CD8-positive, alpha-beta memory T cell (primary cell): ENCODE measurements at regions of chr7 and their contacts with region 1.

Region 1: DNA sequence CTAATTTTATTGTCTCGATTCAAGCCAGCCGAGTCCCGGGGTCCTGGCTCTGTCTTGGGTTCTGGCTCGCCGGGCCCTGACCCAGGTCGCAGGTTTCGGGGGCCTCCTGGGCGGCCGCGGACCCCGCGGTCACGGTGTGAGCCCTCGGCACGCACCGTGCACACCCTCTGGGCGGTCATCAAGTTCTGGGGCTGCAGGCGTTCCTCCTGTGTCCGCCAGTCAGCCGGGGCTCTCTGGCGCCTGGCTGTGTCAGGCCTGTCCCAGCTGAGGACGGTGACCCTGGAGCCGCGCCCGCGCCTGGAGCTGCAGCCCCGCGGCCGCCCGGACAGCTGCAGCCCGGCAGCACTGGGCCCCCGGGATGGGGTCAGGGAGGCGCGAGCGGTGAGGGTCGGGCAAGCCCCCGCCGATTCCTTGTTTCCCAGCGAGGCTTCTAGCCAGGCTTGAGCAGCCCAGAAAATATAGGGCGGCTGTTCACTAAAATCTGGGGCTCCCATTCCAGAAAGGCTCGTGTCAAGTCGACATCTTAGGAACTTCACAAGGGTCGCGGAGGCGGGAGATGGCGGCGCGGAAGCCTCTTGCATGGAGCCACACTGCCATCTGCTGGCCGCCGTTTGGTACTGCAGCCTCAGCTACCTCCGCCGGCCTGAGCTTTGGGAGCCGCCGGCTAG is 4.2 kb upstream of the HOXA7 start:
- DNase-seq: peak; percentile 77 to 89 (median 79)
- H3K4me3 ChIP-seq: peak overlapping the region; percentile 72
- H3K4me3 Mint-ChIP-seq: peak overlapping the region; percentile 78 to 91 (median 82)
- H3K27ac ChIP-seq: no peak overlapping the region
- H3K27ac Mint-ChIP-seq: peak overlapping the region in 3 of 8 donors; percentile 43 to 75 (median 47)
- H3K4me1 ChIP-seq: peaks cover 30% of the 10 kb centered on the region
- H3K4me1 Mint-ChIP-seq: peaks cover 27 to 46% (median 36%) of the 10 kb centered on the region in 3 donors
- H3K27me3 ChIP-seq: peaks cover 81% of the 10 kb centered on the region
- H3K27me3 Mint-ChIP-seq: peaks cover 84 to 87% of the 10 kb centered on the region in 2 donors

Region 2: GRCh38 chr7:25894902-25895791 is 1265.5 kb before region 1 on chr7:
- CTCF ChIA-PET with region 1: interaction called, 26 read pairs
- POLR2A ChIA-PET with region 1: no interaction called
- DNase-seq: peak; percentile 37 to 69 (median 50)
- H3K4me3 ChIP-seq: peak overlapping the region; percentile 30
- H3K4me3 Mint-ChIP-seq: peak overlapping the region in 6 of 7 donors; percentile 60 to 80 (median 64)
- H3K27ac ChIP-seq: no peak overlapping the region
- H3K27ac Mint-ChIP-seq: peak overlapping the region in 1 of 8 donors; percentile 9
- H3K4me1 ChIP-seq: peaks cover 15% of the 10 kb centered on the region
- H3K4me1 Mint-ChIP-seq: peaks cover 24 to 35% (median 34%) of the 10 kb centered on the region in 3 donors
- H3K27me3 ChIP-seq: no peaks in the 10 kb centered on the region
- H3K27me3 Mint-ChIP-seq: peaks cover under 1 to 8% of the 10 kb centered on the region in 2 donors

Region 3: DNA sequence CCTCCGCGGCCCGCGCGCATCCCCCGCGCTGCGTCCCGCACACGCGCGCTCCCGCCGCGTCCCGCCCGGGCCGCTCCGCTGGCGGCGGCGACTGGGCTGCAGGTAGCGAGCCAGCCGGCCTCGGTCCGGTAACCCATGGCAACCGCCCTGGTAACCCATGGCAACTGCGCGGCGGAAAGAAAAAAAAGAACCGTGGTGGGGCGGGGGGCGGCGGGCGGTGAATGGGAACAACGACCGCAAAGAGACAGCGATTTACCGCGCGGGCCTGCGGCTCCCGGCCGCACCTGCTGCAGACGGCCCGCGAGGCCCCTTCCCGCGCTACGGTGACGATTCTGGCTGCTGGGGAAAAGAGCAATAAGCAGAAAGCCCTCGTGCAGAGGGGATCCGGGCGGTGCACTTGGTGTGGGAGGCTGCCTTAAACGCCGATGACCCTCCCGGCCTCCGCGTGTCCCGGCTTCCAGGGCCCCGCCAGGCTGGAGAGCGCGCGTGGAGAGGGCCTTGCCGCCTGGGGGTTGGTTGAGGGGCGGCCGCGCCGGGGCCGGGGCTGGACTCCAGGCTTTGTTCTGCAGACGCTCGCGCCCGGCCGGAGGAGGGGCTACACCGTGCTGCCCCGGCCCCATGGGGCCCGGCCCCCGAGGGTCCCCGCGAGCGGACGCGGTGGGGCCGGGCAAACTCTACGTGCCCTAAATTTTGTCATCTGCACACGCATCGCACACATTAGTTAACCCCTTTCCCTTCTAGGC is 784.3 kb before region 1 on chr7:
- CTCF ChIA-PET with region 1: interaction called, 11 read pairs
- POLR2A ChIA-PET with region 1: no interaction called
- DNase-seq: peak in 4 of 5 donors; percentile 21 to 59 (median 31)
- H3K4me3 ChIP-seq: peak overlapping the region; percentile 57
- H3K4me3 Mint-ChIP-seq: peak overlapping the region; percentile 77 to 94 (median 86)
- H3K27ac ChIP-seq: no peak overlapping the region
- H3K27ac Mint-ChIP-seq: peak overlapping the region in 2 of 8 donors; percentile 22 to 89
- H3K4me1 ChIP-seq: peaks cover 5% of the 10 kb centered on the region
- H3K4me1 Mint-ChIP-seq: peaks cover 0 to 10% (median 5%) of the 10 kb centered on the region in 3 donors
- H3K27me3 ChIP-seq: peaks cover 10% of the 10 kb centered on the region
- H3K27me3 Mint-ChIP-seq: peaks cover 8 to 45% of the 10 kb centered on the region in 2 donors

Region 4: DNA sequence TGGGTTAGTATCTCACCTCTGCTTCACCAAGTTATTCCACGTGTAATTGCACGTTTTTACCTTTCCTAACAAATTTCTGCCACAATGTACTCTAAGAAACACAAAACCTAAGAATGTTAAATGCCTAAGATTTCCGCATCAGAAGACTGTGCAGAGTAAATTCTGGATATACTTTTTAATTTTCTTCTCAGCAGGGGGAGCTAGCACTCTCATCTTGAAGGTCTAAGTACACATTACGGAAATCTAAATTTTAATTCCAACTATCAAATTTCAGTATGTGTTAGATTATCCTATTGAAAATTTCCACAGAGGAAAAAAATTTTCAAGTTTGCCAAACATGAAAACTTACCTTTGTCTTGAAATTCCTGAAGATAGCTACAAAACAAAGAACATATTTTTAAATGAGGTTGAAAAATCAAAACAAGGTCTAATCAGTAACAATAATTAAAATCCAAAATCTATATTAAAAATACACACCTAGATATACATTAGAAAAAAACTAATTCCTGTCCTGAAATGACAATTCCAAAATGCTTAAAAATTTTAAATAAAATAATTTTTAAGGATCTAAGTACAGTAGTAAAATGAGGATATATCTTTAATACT is 306.8 kb before region 1 on chr7:
- CTCF ChIA-PET with region 1: interaction called, 14 read pairs
- POLR2A ChIA-PET with region 1: no interaction called
- DNase-seq: no peak
- H3K4me3 ChIP-seq: no peak overlapping the region
- H3K4me3 Mint-ChIP-seq: no peak overlapping the region
- H3K27ac ChIP-seq: no peak overlapping the region
- H3K27ac Mint-ChIP-seq: no peak overlapping the region
- H3K4me1 ChIP-seq: peaks cover 5% of the 10 kb centered on the region
- H3K4me1 Mint-ChIP-seq: peaks cover 8 to 18% (median 11%) of the 10 kb centered on the region in 3 donors
- H3K27me3 ChIP-seq: peaks cover 4% of the 10 kb centered on the region
- H3K27me3 Mint-ChIP-seq: peaks cover 12 to 28% of the 10 kb centered on the region in 2 donors

Region 5: DNA sequence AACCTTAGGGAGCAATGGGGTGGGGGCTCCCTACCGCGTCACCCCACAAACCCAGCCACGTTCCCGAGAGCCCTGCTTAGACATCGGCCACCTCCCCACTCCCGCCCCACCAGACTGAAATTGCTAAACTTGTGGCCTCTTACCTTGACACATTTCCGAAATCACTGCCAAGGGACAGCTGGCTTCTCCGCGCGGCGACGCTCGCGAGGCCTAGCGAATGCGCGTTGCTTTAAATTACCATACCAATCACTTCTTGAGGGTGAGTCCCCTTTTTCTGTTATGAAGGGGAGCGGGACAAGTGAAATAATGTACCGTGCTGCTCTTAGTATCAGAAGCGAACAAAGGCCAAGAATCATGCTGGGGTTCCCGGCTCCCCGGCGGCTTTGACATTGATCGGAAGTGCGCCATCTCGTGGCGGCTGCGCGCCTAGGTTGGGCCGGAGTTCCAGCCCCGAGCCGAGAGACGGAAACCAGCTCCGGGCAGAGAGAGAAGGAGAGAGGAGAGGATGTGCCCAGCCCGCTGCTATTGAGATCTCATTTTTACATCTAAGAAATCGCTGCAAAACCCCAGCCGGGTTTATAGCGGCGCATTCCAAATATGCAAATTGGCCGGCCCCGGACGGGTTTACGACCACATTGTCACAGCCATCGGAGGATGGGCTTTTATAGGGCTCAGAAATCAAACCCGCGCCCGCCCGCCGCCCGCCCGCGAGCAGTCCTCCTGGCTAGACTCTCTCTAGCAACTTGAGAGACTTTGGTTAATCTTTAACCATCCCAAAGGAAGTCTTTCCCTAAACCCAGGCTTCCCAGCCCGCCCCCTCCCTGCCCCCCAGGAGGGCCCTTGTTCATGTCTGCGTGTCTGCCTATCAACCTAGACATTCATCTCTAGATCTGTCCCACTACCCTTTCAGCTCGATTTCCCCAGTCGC is 19.1 kb after region 1 on chr7:
- CTCF ChIA-PET with region 1: interaction called, 31 read pairs
- POLR2A ChIA-PET with region 1: no interaction called
- DNase-seq: peak in 3 of 5 donors; percentile 40 to 58 (median 53)
- H3K4me3 ChIP-seq: no peak overlapping the region
- H3K4me3 Mint-ChIP-seq: peak overlapping the region in 5 of 7 donors; percentile 4 to 45 (median 29)
- H3K27ac ChIP-seq: no peak overlapping the region
- H3K27ac Mint-ChIP-seq: peak overlapping the region in 1 of 8 donors; percentile 44
- H3K4me1 ChIP-seq: peaks cover 16% of the 10 kb centered on the region
- H3K4me1 Mint-ChIP-seq: peaks cover 16 to 25% (median 18%) of the 10 kb centered on the region in 3 donors
- H3K27me3 ChIP-seq: peaks cover 50% of the 10 kb centered on the region
- H3K27me3 Mint-ChIP-seq: peaks cover 59 to 85% of the 10 kb centered on the region in 2 donors

Region 6: DNA sequence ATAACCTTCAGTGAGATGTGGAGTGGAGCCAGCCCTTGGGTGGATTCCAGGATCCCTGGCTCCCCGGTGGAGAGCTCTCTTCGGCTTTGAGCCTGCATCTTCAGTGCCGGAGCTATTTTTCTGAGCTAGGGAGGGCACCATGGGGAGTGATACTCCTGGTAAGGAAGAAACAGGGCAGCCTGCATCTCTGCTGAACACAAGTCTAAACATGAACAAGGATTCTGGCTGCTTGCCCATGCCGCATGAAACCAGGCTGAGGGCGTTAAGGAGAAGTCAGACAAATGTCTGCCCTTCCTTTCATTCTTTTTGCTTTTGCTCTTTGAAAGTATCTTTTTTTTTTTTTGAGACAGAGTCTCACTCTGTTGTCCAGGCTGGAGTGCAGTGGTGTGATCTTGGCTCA is 142.3 kb after region 1 on chr7:
- CTCF ChIA-PET with region 1: no interaction called
- POLR2A ChIA-PET with region 1: no interaction called
- DNase-seq: no peak
- H3K4me3 ChIP-seq: no peak overlapping the region
- H3K4me3 Mint-ChIP-seq: no peak overlapping the region
- H3K27ac ChIP-seq: no peak overlapping the region
- H3K27ac Mint-ChIP-seq: no peak overlapping the region
- H3K4me1 ChIP-seq: no peaks in the 10 kb centered on the region
- H3K4me1 Mint-ChIP-seq: no peaks in the 10 kb centered on the region
- H3K27me3 ChIP-seq: no peaks in the 10 kb centered on the region
- H3K27me3 Mint-ChIP-seq: peaks cover 5 to 38% of the 10 kb centered on the region in 2 donors